Activated CD4-positive, alpha-beta T cell treated with anti-CD3 and anti-CD28 coated beads, Interleukin-2, amount 10 ng/mL, durations not matched to agents 24 days and 14 days (primary cell): ENCODE measurements at regions of chr1 and their contacts with region 1.

Region 1: DNA sequence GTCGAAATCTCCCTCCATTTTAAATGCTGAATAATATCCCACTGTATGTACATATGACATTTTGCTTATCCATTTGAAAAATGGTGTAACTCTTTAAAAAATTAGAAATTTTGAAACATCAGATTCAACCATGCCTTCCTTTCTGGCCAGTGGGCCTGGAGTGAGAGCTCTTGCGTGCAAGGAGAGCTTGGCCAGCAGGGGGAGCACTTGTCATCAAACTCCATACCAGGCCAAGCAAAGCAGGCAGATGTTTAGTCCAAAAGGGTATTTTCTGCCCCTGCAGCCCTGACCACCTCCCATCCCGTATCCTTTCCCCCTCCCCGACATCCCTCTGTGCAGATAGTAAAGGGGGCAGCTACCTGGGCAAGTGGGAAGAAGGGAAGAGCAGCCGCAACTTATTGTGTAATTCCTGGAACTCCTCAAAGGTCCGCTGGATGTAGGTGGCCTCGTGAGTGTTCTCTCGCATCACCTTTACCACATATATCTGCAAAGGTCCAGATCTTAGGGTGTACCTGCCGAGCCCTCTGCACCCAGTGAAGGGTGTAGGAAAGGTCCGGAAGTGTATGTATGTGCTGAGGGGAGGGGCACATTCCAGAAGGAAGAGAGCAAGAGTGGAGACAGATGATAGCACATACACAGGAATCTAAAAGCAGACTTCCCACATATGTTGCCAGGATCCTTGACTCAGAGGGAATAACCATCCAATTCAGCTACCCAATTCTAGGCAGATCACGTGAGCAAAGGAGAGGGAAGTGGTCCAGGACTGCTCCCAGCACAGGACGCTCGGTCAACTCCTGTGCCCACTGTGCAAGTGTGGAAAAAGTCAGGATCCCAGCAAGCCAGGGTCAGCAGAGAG is 19.9 kb upstream of the PPP1R15B start:
- DNase-seq: peak; percentile 92
- H3K4me3 Mint-ChIP-seq: no peak overlapping the region
- H3K27ac Mint-ChIP-seq: no peak overlapping the region
- H3K4me1 Mint-ChIP-seq: peaks cover 2% of the 10 kb centered on the region
- H3K27me3 Mint-ChIP-seq: no peaks in the 10 kb centered on the region

Region 2: DNA sequence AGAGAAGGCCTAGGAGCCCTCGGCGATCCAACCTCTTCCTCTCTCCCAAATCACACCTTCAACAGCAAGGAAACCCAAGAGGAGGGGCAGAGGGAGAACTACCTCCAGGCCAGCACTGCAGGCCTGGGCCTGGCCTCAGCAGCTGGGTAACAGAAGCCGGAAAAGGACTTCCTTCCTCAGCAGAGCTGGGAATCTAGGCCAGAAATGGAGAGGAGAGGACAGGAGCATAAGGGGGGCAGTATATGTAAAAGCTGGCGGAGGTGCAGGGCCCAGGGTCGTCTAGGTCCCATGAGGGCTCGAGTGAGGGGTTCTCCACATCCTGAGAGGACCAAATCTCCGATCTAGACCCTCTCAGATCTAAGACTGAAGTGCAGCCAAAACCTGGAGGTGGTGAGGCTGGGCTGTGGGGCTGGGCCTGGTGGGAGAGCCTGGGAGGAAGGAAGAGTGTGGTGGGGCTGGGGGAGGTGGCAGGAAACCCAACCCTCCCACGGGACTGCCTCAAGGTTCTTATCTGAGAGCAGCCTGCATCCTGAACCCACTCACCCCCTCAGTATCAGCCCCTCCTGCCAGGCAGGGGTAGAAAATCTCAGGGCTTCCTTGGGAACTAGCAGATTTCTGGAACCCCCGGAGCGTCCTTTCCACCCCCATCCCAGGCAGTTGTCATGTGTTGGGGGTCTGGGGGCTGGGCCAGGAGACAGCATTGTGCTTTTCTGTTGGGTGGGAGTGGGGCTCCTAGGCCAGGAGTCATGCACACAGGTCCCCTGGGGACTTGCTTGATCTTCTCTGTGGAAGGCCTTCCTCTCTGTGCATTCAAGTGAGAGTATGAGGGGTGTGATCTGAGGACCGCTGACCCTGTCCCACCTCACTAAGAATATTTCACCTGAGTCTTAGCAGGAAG is 30.0 kb after region 1 on chr1:
- intact Hi-C with region 1: loop called (anchors 2 kb)
- DNase-seq: peak; percentile 71
- H3K4me3 Mint-ChIP-seq: peak overlapping the region; percentile 46
- H3K27ac Mint-ChIP-seq: peak overlapping the region; percentile 74
- H3K4me1 Mint-ChIP-seq: peaks cover 54% of the 10 kb centered on the region
- H3K27me3 Mint-ChIP-seq: no peaks in the 10 kb centered on the region

Region 3: GRCh38 chr1:204530932-204531331 is 99.4 kb after region 1 on chr1:
- intact Hi-C with region 1: no loop called
- DNase-seq: no peak
- H3K4me3 Mint-ChIP-seq: no peak overlapping the region
- H3K27ac Mint-ChIP-seq: no peak overlapping the region
- H3K4me1 Mint-ChIP-seq: peaks cover 8% of the 10 kb centered on the region
- H3K27me3 Mint-ChIP-seq: no peaks in the 10 kb centered on the region

Region 4: GRCh38 chr1:204806943-204807687 is 375.6 kb after region 1 on chr1:
- intact Hi-C with region 1: loop called (anchors 10 kb)
- DNase-seq: peak; percentile 95
- H3K4me3 Mint-ChIP-seq: peak overlapping the region; percentile 89
- H3K27ac Mint-ChIP-seq: peak overlapping the region; percentile 61
- H3K4me1 Mint-ChIP-seq: peaks cover 6% of the 10 kb centered on the region
- H3K27me3 Mint-ChIP-seq: peaks cover 16% of the 10 kb centered on the region

Region 5: DNA sequence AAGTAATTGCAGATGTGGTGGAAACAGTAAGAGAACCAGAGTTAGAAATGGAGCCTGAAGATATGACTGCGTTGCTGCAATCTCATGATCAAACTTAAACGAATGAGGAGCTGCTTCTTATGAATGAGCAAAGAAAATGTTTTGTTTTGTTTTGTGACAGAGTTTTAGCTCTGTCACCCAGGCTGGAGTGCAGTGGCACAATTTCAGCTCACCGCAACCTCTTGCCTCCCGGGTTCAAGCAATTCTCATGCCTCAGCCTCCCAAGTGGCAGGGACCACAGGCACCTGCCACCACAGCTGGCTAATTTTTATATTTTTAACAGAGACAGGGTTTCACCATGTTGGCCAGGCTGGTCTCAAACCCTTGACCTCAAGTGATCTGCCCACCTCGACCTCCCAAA is 385.8 kb after region 1 on chr1:
- intact Hi-C with region 1: no loop called
- DNase-seq: no peak
- H3K4me3 Mint-ChIP-seq: no peak overlapping the region
- H3K27ac Mint-ChIP-seq: no peak overlapping the region
- H3K4me1 Mint-ChIP-seq: no peaks in the 10 kb centered on the region
- H3K27me3 Mint-ChIP-seq: peaks cover 25% of the 10 kb centered on the region